ENCODE measurements at regions of chr16 and their contacts with region 1.

Region 1: DNA sequence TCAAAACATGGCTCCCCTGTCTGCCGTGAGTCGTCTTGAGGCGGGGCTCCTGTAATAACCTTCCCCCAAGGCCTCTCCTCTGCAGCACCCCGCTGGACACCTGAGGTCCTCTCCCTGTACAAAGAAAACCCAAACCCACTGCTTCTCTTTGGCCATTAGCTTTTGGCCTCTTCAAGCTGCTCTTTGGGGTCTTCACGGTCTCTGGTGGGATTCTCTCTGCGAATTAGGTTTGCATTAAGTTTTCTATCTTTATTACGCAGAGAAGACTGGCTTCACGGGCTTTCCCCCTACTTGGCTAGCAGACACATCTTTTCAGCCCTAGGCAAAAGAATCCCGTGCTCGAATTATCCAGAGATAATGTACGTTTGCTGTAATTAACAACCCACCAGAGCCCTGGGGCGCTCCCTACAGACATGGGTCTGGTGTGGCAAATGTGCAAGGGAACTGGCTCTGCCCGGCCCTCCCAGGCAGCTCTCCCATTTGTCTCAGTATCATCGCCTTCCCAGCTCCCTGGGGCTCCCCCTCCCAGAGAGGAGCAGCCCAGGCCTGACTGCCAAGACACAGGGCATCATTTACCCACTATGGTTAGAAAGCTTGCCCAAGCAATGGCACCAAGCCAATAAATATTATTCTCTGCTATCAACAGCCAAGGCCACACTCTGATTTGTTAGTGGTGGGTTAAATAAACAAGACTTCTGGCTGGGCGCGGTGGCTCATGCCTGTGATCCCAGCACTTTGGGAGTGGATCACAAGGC is 24.7 kb upstream of the KLHDC4 start:
- DNase-seq: no peak
- ATAC-seq: peak; percentile 71
- H3K4me3 ChIP-seq: no peak overlapping the region
- H3K27ac ChIP-seq: no peak overlapping the region
- H3K4me1 ChIP-seq: no peaks in the 10 kb centered on the region
- H3K27me3 ChIP-seq: no peaks in the 10 kb centered on the region

Region 2: GRCh38 chr16:87834623-87835407 is 44.4 kb after region 1 on chr16:
- intact Hi-C with region 1: loop called in 1 of 2 experiments (anchors 5 kb)
- DNase-seq: no peak
- ATAC-seq: no peak
- H3K4me3 ChIP-seq: no peak overlapping the region
- H3K27ac ChIP-seq: no peak overlapping the region
- H3K4me1 ChIP-seq: no peaks in the 10 kb centered on the region
- H3K27me3 ChIP-seq: no peaks in the 10 kb centered on the region

Measured in aorta (tissue), 5 donors.